CD8-positive, alpha-beta T cell (primary cell): ENCODE measurements at regions of chr20 and their contacts with region 1.

Region 1: DNA sequence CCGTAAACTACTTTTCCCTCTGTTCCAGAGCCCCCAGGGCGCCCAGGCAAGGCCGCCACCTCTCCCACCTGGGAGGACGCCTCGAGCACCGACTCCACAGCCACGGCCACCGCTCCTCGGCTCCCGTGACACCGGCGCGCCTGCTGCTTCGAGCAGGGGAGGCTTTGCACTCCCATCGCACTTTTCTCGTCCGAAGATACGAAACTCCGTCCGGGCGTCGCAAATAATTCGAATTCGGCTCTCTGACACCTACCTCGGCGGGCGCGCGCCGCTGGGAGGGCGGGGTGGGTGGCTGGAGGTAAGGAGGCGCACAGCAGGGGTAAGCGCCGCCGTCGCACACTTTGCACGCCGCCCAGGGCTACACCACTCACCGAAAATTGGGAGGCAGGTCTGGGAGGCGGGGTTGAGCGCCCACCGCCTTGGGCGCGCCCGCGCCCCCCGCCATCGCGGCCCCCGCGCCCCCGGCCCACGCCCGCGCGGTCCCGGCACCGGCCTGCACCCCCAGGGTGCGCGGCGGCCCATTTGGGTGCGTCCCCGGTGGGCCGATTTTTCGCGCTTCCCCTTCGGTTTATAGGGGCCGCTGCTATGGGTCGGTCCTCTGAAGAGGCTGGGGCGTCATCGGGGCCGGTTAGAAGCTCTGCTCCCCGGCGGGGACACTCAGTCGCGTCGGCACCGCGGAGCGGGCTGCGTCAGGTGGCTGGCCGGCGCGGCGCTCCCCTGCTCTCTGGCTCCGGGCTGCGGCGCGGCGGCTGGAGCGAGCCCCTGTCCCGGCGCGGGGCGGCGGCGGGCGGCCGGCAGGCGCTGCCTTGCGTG is 36.2 kb downstream of the GNAS start:
- DNase-seq: peak; percentile 69 to 92 (median 82)
- ATAC-seq: peak; percentile 49
- H3K4me3 ChIP-seq: peak overlapping the region; percentile 66 to 72
- H3K4me3 Mint-ChIP-seq: peak overlapping the region; percentile 83
- H3K27ac ChIP-seq: peak overlapping the region; percentile 79 to 95
- H3K27ac Mint-ChIP-seq: peak overlapping the region; percentile 92
- H3K4me1 ChIP-seq: peaks cover 14% of the 10 kb centered on the region
- H3K4me1 Mint-ChIP-seq: peaks cover 35% of the 10 kb centered on the region
- H3K27me3 ChIP-seq: no peaks in the 10 kb centered on the region
- H3K27me3 Mint-ChIP-seq: no peaks in the 10 kb centered on the region
- CTCF ChIP-seq: no peak

Region 2: GRCh38 chr20:58870239-58871014 is 18.3 kb before region 1 on chr20:
- CTCF ChIA-PET with region 1: no interaction called
- POLR2A ChIA-PET with region 1: interaction called, 4 read pairs
- intact Hi-C with region 1: loop called in 1 of 2 experiments (anchors 1 kb)
- DNase-seq: peak in 7 of 9 experiments; percentile 27 to 75 (median 65)
- ATAC-seq: peak; percentile 81
- H3K4me3 ChIP-seq: no peak overlapping the region
- H3K4me3 Mint-ChIP-seq: no peak overlapping the region
- H3K27ac ChIP-seq: no peak overlapping the region
- H3K27ac Mint-ChIP-seq: no peak overlapping the region
- H3K4me1 ChIP-seq: no peaks in the 10 kb centered on the region
- H3K4me1 Mint-ChIP-seq: peaks cover 5% of the 10 kb centered on the region
- H3K27me3 ChIP-seq: no peaks in the 10 kb centered on the region
- H3K27me3 Mint-ChIP-seq: no peaks in the 10 kb centered on the region
- CTCF ChIP-seq: peak; percentile 73

Region 3: DNA sequence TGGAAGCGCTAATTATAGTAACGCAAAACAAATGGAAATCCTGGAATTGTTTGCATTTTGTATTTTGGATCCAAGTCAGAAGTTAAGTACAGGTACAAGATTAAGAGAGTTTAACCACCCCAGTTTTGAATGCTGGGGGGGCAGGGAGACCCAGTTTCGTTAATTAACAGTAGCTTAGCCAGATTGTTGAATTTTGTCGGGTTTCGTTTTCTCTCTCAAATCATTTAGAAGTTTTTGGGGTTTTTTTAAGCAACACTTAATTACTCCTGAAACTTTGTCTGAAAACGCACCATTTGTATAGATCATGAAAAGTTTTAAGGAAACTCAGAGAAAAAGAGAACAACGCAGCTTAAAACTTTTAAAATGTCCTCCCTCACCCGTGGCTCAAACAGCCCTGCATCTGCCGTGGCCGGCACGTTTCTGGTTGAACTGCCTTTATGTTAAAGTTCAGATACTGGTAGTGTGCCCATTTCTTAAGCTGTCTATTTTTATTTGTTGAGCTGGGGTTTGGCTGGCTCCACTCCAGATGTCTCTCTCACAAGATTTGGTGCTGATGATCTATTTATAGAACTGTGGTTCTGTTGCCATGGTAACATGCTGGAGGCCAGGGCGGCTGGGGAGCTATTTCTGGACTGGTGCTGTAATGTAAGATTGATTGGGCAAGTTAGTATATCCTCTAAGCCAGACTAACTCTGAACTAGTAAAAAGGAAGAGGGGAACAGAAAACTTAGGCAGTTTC is 18.8 kb after region 1 on chr20:
- CTCF ChIA-PET with region 1: no interaction called
- POLR2A ChIA-PET with region 1: interaction called, 16 read pairs
- intact Hi-C with region 1: loop called (anchors 1 to 2 kb)
- DNase-seq: peak; percentile 26 to 90 (median 55)
- ATAC-seq: peak; percentile 48
- H3K4me3 ChIP-seq: peak overlapping the region in 1 of 2 experiments; percentile 2
- H3K4me3 Mint-ChIP-seq: peak overlapping the region; percentile 71
- H3K27ac ChIP-seq: peak overlapping the region; percentile 1 to 58
- H3K27ac Mint-ChIP-seq: peak overlapping the region; percentile 84
- H3K4me1 ChIP-seq: peaks cover 38% of the 10 kb centered on the region
- H3K4me1 Mint-ChIP-seq: peaks cover 72% of the 10 kb centered on the region
- H3K27me3 ChIP-seq: no peaks in the 10 kb centered on the region
- H3K27me3 Mint-ChIP-seq: no peaks in the 10 kb centered on the region
- CTCF ChIP-seq: no peak

Region 4: DNA sequence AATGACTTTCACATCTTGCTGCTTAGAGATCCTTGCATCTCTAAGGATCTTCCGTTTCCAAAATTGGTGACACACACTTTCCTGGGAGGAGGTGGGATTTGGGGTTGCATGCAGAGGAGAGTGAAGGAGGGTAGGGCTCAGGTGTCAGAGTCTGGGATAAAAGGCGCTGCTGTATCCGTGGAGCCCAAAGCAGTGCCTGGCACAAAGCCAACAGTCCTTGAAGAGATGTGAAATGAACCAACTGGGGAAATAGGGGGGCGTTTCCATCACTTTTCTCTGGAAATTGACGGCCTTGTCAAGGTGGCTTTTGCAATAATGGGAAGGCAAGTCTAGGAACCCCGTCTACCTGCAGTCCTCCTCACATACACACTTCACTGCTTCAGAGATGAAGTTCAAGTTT is 32.8 kb after region 1 on chr20:
- CTCF ChIA-PET with region 1: no interaction called
- POLR2A ChIA-PET with region 1: no interaction called
- intact Hi-C with region 1: no loop called
- DNase-seq: no peak
- ATAC-seq: no peak
- H3K4me3 ChIP-seq: no peak overlapping the region
- H3K4me3 Mint-ChIP-seq: no peak overlapping the region
- H3K27ac ChIP-seq: no peak overlapping the region
- H3K27ac Mint-ChIP-seq: no peak overlapping the region
- H3K4me1 ChIP-seq: no peaks in the 10 kb centered on the region
- H3K4me1 Mint-ChIP-seq: no peaks in the 10 kb centered on the region
- H3K27me3 ChIP-seq: no peaks in the 10 kb centered on the region
- H3K27me3 Mint-ChIP-seq: no peaks in the 10 kb centered on the region
- CTCF ChIP-seq: no peak

Region 5: GRCh38 chr20:59042796-59043660 is 154.3 kb after region 1 on chr20:
- CTCF ChIA-PET with region 1: no interaction called
- POLR2A ChIA-PET with region 1: interaction called, 7 read pairs
- intact Hi-C with region 1: loop called in 1 of 2 experiments (anchors 1 kb)
- DNase-seq: peak; percentile 88 to 97 (median 94)
- ATAC-seq: peak; percentile 92
- H3K4me3 ChIP-seq: peak overlapping the region; percentile 67 to 94
- H3K4me3 Mint-ChIP-seq: peak overlapping the region; percentile 90
- H3K27ac ChIP-seq: peak overlapping the region; percentile 74 to 92
- H3K27ac Mint-ChIP-seq: peak overlapping the region; percentile 93
- H3K4me1 ChIP-seq: peaks cover 48% of the 10 kb centered on the region
- H3K4me1 Mint-ChIP-seq: peaks cover 52% of the 10 kb centered on the region
- H3K27me3 ChIP-seq: no peaks in the 10 kb centered on the region
- H3K27me3 Mint-ChIP-seq: no peaks in the 10 kb centered on the region
- CTCF ChIP-seq: no peak

Region 6: DNA sequence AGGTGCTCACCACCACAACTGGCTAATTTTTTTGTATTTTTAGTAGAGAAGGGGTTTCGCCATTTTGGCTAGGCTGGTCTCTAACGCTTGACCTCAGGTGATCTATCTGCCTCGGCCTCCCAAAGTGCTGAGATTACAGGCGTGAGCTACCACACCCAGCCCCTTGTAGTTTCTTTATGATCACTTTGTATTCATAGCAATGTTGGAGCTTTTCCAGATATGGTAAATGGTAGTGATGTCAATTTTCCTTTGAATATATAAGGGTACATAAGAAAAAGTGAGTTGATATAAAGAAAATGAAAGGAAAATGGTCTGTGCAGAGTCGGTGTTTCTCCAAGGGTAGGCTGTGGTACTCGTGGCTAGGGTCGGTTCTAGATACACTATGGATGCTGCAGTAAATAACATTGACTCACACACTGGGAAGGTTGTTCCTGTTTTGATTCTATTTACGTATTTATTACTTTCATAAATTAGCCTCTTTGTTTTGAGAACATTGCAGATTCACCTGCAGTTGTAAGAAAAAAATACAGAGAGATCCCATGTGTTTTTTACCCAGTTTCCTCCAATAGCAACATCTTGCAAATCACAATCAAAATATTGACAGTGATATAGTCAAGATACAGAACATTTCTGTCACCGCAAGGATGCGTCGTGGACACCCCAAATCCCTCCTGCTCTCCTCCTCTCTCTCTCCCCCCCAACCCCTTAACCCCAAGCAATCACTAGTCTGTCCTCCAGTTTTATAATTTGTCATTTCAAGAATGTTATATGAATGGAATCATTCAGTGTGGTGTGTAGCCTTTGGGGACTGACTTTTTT is 277.4 kb after region 1 on chr20:
- CTCF ChIA-PET with region 1: no interaction called
- POLR2A ChIA-PET with region 1: interaction called, 3 read pairs
- intact Hi-C with region 1: loop called (anchors 1 to 5 kb)
- DNase-seq: peak in 4 of 9 experiments; percentile 20 to 79 (median 60)
- ATAC-seq: peak; percentile 64
- H3K4me3 ChIP-seq: peak overlapping the region; percentile 59 to 62
- H3K4me3 Mint-ChIP-seq: peak overlapping the region; percentile 84
- H3K27ac ChIP-seq: peak overlapping the region; percentile 93 to 95
- H3K27ac Mint-ChIP-seq: peak overlapping the region; percentile 93
- H3K4me1 ChIP-seq: peaks cover 85% of the 10 kb centered on the region
- H3K4me1 Mint-ChIP-seq: peaks cover 93% of the 10 kb centered on the region
- H3K27me3 ChIP-seq: no peaks in the 10 kb centered on the region
- H3K27me3 Mint-ChIP-seq: no peaks in the 10 kb centered on the region
- CTCF ChIP-seq: no peak